Endothelial cell of umbilical vein (primary cell): ENCODE measurements at regions of chr11 and their contacts with region 1.

Region 1: GRCh38 chr11:32176223-32176934 is 85.5 kb downstream of the RCN1 start:
- DNase-seq: peak; percentile 88
- H3K4me3 ChIP-seq: no peak overlapping the region
- H3K27ac ChIP-seq: no peak overlapping the region
- H3K4me1 ChIP-seq: no peaks in the 10 kb centered on the region
- H3K27me3 ChIP-seq: peaks cover 14 to 16% of the 10 kb centered on the region in 2 experiments
- CTCF ChIP-seq: peak; percentile 79 to 83
- POLR2A ChIP-seq: no peak

Region 2: DNA sequence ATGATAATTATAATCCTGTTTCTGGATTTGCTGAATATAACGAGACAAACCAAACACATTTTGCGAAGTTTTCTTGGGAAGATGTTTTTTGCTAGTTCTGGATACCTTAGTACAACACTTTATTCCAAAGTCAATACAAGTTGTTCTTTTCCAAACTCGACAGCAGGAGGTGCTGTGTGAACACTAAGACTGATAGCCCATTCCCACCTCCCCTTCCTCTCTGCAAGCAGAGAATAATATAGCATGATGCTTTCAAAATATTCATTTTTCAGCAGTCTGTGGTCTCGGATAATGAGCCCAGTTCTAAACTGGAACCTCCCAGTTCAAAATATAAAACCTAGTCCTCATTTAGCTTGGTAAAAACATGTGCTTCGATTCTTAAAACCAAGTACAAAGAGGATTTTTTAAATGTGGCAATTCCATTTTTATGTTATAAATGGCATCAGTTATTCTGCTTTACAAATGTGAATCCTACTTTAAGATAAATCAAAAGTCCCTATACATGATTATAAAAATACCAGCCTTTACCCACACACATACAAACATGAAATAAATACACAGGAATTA is 936.0 kb before region 1 on chr11:
- CTCF ChIA-PET with region 1: interaction called, 25 read pairs
- POLR2A ChIA-PET with region 1: no interaction called
- dilution Hi-C with region 1: no loop called
- intact Hi-C with region 1: loop called (anchors 2 kb)
- DNase-seq: peak; percentile 51
- H3K4me3 ChIP-seq: no peak overlapping the region
- H3K27ac ChIP-seq: no peak overlapping the region
- H3K4me1 ChIP-seq: no peaks in the 10 kb centered on the region
- H3K27me3 ChIP-seq: no peaks in the 10 kb centered on the region
- CTCF ChIP-seq: peak; percentile 38 to 51
- POLR2A ChIP-seq: no peak

Region 3: DNA sequence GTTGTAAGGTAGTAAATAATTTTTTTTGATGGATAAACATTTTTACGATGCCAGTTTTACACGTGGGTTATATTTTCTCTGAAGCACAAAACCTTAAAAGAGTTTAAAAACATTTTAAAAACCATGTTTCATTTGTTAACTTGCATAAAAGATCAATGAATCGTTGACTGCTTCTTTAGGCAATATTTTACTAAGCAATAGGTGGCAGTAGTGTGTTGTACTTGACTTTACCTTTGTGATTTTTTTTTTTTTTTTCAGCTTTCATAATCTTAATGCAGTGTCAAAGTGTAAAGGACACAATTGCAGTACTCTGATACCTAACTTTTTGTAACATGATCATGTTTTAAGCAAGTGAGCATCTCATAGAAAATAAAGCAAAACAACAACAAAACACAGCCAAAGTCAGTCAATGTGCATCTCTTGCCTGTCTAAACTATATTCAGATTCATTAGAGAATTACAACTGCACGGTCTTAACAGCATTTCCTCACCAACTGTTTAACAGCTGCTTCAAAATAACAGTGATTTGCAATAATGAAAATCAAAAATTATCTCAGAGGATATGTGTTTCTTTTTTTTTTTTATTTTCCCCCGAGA is 779.0 kb before region 1 on chr11:
- CTCF ChIA-PET with region 1: interaction called, 3 read pairs
- POLR2A ChIA-PET with region 1: no interaction called
- dilution Hi-C with region 1: no loop called
- intact Hi-C with region 1: loop called (anchors 5 kb)
- DNase-seq: peak; percentile 39
- H3K4me3 ChIP-seq: no peak overlapping the region
- H3K27ac ChIP-seq: no peak overlapping the region
- H3K4me1 ChIP-seq: no peaks in the 10 kb centered on the region
- H3K27me3 ChIP-seq: no peaks in the 10 kb centered on the region
- CTCF ChIP-seq: peak; percentile 37 to 39
- POLR2A ChIP-seq: no peak

Region 4: DNA sequence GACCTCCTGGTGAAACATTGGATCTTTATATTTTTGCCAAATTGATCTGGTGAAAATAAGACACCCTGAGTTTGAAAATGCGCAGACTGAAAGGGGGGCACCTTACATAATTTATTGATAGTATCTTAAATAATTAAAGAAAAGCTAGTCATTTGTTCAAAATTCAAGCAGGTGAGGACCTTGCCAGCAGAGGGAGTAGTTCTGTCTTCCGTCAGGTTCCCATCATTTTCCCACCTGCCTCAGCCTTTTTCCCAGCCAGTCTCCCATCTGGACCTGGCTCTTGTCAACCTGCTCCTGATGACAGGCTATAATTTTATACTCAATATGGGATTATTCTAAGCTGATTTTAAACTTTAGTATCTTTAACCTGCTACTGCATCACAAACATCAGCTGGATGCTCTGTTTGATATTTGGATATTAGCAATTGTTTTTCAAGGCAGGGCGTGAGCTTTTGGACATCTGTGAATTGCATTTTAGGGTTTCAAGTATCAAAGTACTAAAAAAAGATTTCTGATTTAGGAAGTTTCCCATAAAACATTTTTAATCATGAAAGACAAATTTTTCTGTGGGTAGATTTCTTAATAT is 534.8 kb before region 1 on chr11:
- CTCF ChIA-PET with region 1: interaction called, 39 read pairs
- POLR2A ChIA-PET with region 1: no interaction called
- dilution Hi-C with region 1: no loop called
- intact Hi-C with region 1: loop called (anchors 2 kb)
- DNase-seq: peak; percentile 41
- H3K4me3 ChIP-seq: no peak overlapping the region
- H3K27ac ChIP-seq: no peak overlapping the region
- H3K4me1 ChIP-seq: peaks cover 7% of the 10 kb centered on the region
- H3K27me3 ChIP-seq: no peaks in the 10 kb centered on the region
- CTCF ChIP-seq: peak; percentile 56 to 59
- POLR2A ChIP-seq: no peak

Region 5: GRCh38 chr11:31958076-31958735 is 218.2 kb before region 1 on chr11:
- CTCF ChIA-PET with region 1: interaction called, 23 read pairs
- POLR2A ChIA-PET with region 1: no interaction called
- dilution Hi-C with region 1: no loop called
- intact Hi-C with region 1: loop called (anchors 1 kb)
- DNase-seq: peak; percentile 44
- H3K4me3 ChIP-seq: no peak overlapping the region
- H3K27ac ChIP-seq: no peak overlapping the region
- H3K4me1 ChIP-seq: no peaks in the 10 kb centered on the region
- H3K27me3 ChIP-seq: no peaks in the 10 kb centered on the region
- CTCF ChIP-seq: peak; percentile 83 to 90
- POLR2A ChIP-seq: no peak

Region 6: GRCh38 chr11:32034149-32034548 is 142.2 kb before region 1 on chr11:
- CTCF ChIA-PET with region 1: interaction called, 10 read pairs
- POLR2A ChIA-PET with region 1: no interaction called
- dilution Hi-C with region 1: loop called (anchors 25 kb)
- intact Hi-C with region 1: no loop called
- DNase-seq: no peak
- H3K4me3 ChIP-seq: no peak overlapping the region
- H3K27ac ChIP-seq: no peak overlapping the region
- H3K4me1 ChIP-seq: no peaks in the 10 kb centered on the region
- H3K27me3 ChIP-seq: peaks cover 0 to 2% of the 10 kb centered on the region in 2 experiments
- CTCF ChIP-seq: no peak
- POLR2A ChIP-seq: no peak

Region 7: GRCh38 chr11:32052218-32052617 is 124.2 kb before region 1 on chr11:
- CTCF ChIA-PET with region 1: interaction called, 249 read pairs
- POLR2A ChIA-PET with region 1: no interaction called
- dilution Hi-C with region 1: loop called (anchors 25 kb)
- intact Hi-C with region 1: loop called (anchors 1 kb)
- DNase-seq: peak; percentile 61
- H3K4me3 ChIP-seq: no peak overlapping the region
- H3K27ac ChIP-seq: no peak overlapping the region
- H3K4me1 ChIP-seq: no peaks in the 10 kb centered on the region
- H3K27me3 ChIP-seq: peaks cover 28 to 30% of the 10 kb centered on the region in 2 experiments
- CTCF ChIP-seq: peak; percentile 57 to 69
- POLR2A ChIP-seq: no peak

Region 8: DNA sequence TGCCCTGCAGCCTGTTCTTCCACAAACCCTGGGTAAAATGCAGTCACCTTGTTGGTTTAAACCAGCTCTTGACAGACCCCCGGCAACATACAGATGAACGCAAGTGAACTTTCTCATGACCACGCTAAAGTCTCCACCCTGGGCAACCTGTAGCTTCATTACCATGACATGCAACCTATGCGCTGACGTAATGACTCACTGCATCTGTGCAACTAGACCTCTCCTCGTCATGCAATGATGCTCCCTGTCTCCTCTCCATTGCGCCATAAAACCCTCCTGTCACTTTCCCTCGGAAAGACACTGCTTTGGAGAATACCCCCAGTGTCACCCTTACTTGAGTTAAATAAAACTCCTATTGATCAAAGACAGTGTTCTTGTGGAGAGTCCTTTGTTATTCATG is 33.0 kb before region 1 on chr11:
- CTCF ChIA-PET with region 1: no interaction called
- POLR2A ChIA-PET with region 1: no interaction called
- dilution Hi-C with region 1: no loop called
- intact Hi-C with region 1: no loop called
- DNase-seq: no peak
- H3K4me3 ChIP-seq: no peak overlapping the region
- H3K27ac ChIP-seq: no peak overlapping the region
- H3K4me1 ChIP-seq: no peaks in the 10 kb centered on the region
- H3K27me3 ChIP-seq: peaks cover 0 to 6% of the 10 kb centered on the region in 2 experiments
- CTCF ChIP-seq: no peak
- POLR2A ChIP-seq: no peak

Region 9: GRCh38 chr11:32487270-32487669 is 310.9 kb after region 1 on chr11:
- CTCF ChIA-PET with region 1: no interaction called
- POLR2A ChIA-PET with region 1: no interaction called
- dilution Hi-C with region 1: no loop called
- intact Hi-C with region 1: no loop called
- DNase-seq: no peak
- H3K4me3 ChIP-seq: no peak overlapping the region
- H3K27ac ChIP-seq: no peak overlapping the region
- H3K4me1 ChIP-seq: no peaks in the 10 kb centered on the region
- H3K27me3 ChIP-seq: no peaks in the 10 kb centered on the region
- CTCF ChIP-seq: no peak
- POLR2A ChIP-seq: no peak